Heart right ventricle (tissue), 16 donors: ENCODE measurements at regions of chrX and their contacts with region 1.

Region 1: GRCh38 chrX:47704741-47705140 is 45.8 kb upstream of the UXT start:
- DNase-seq: no peak
- ATAC-seq: no peak
- H3K4me3 ChIP-seq: no peak overlapping the region
- H3K27ac ChIP-seq: no peak overlapping the region
- H3K4me1 ChIP-seq: no peaks in the 10 kb centered on the region
- H3K27me3 ChIP-seq: peaks cover 0 to 43% (median 0%) of the 10 kb centered on the region in 7 donors
- CTCF ChIP-seq: no peak

Region 2: GRCh38 chrX:47723689-47724088 is 18.9 kb after region 1 on chrX:
- intact Hi-C with region 1: loop called in 1 of 10 experiments (anchors 2 kb)
- DNase-seq: no peak
- ATAC-seq: no peak
- H3K4me3 ChIP-seq: no peak overlapping the region
- H3K27ac ChIP-seq: no peak overlapping the region
- H3K4me1 ChIP-seq: no peaks in the 10 kb centered on the region
- H3K27me3 ChIP-seq: no peaks in the 10 kb centered on the region
- CTCF ChIP-seq: no peak

Region 3: DNA sequence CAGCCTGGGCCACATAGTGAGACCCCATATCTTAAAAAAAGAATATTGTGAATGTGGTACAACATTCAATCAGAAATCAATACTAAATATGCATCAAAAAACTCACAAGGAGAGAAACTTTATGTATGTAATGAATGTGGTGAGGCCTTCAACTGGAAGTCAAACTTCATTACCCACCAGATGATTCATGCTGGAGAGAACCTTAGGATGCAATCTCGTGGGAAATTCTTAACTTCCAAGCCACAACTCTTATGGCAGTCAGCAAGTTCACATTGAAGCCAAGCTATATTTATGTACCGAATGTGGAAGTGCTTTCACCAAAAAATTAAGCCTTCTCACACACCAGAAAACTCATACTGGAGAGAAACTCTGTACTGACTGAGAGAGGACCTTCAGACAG is 38.8 kb after region 1 on chrX:
- intact Hi-C with region 1: no loop called
- DNase-seq: no peak
- ATAC-seq: no peak
- H3K4me3 ChIP-seq: no peak overlapping the region
- H3K27ac ChIP-seq: no peak overlapping the region
- H3K4me1 ChIP-seq: no peaks in the 10 kb centered on the region
- H3K27me3 ChIP-seq: peaks cover 0 to 20% (median 0%) of the 10 kb centered on the region in 7 donors
- CTCF ChIP-seq: no peak

Region 4: DNA sequence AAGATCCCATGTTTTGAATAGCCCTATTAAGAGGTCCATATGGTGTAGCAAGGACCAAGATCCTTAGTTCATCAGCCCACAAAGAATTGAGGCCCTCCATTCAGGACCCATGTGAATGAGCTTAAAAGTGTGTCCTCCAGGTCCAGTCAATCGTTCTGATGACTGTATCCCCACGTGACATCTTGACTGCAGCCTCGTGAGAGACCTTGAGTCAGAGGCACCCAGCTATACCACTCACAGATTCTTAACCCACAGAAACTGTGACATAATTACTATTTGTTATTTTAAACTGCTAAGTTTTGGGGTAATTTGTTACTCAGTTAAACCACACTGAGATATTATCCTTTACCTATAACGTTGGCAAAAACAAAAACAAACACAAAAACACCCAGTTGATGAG is 236.7 kb after region 1 on chrX:
- intact Hi-C with region 1: no loop called
- DNase-seq: no peak
- ATAC-seq: no peak
- H3K4me3 ChIP-seq: no peak overlapping the region
- H3K27ac ChIP-seq: no peak overlapping the region
- H3K4me1 ChIP-seq: no peaks in the 10 kb centered on the region
- H3K27me3 ChIP-seq: no peaks in the 10 kb centered on the region
- CTCF ChIP-seq: no peak

Region 5: DNA sequence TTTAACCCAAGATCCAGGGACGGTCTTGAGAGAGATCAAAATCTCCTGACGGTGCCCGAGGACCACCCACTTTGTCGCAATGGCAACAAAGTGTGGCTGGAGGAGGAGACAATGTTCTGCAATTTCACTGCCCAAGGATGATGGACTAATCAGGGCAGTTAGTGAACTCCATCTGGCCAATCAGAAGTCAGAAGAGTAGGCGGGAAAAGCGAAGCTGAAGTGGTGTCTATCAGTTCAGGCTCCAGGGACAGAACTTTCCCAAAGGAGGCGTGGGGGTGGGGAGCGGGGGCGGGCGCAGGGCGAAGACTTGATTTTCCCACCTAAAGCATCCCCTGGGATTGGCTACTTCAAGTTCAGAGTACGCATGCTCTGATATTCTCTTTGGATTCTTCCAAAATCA is 451.3 kb after region 1 on chrX:
- intact Hi-C with region 1: no loop called
- DNase-seq: no peak
- ATAC-seq: no peak
- H3K4me3 ChIP-seq: no peak overlapping the region
- H3K27ac ChIP-seq: no peak overlapping the region
- H3K4me1 ChIP-seq: no peaks in the 10 kb centered on the region
- H3K27me3 ChIP-seq: peaks cover 0 to 16% (median 0%) of the 10 kb centered on the region in 7 donors
- CTCF ChIP-seq: no peak